ENCODE measurements at regions of chr12 and their contacts with region 1.

Region 1: GRCh38 chr12:13523536-13524307 is 327.2 kb downstream of the EMP1 start:
- DNase-seq: no peak
- ATAC-seq: no peak
- H3K4me3 ChIP-seq: no peak overlapping the region
- H3K27ac ChIP-seq: no peak overlapping the region
- H3K4me1 ChIP-seq: no peaks in the 10 kb centered on the region
- H3K27me3 ChIP-seq: no peaks in the 10 kb centered on the region
- CTCF ChIP-seq: no peak

Region 2: GRCh38 chr12:13255792-13256691 is 267.7 kb before region 1 on chr12:
- intact Hi-C with region 1: loop called in 1 of 2 experiments (anchors 10 kb)
- DNase-seq: peak; percentile 83 to 97 (median 94)
- ATAC-seq: peak; percentile 100
- H3K4me3 ChIP-seq: peak overlapping the region; percentile 16 to 19
- H3K27ac ChIP-seq: no peak overlapping the region
- H3K4me1 ChIP-seq: peaks cover 0 to 19% of the 10 kb centered on the region in 2 donors
- H3K27me3 ChIP-seq: no peaks in the 10 kb centered on the region
- CTCF ChIP-seq: peak; percentile 97 to 98